ENCODE measurements at regions of chr19 and their contacts with region 1.

Region 1: GRCh38 chr19:38929929-38930775 is at the start of gene SARS2:
- DNase-seq: peak; percentile 59
- H3K4me3 ChIP-seq: peak within 1 kb of the TSS; percentile 97
- CTCF ChIP-seq: peak; percentile 97

Region 2: DNA sequence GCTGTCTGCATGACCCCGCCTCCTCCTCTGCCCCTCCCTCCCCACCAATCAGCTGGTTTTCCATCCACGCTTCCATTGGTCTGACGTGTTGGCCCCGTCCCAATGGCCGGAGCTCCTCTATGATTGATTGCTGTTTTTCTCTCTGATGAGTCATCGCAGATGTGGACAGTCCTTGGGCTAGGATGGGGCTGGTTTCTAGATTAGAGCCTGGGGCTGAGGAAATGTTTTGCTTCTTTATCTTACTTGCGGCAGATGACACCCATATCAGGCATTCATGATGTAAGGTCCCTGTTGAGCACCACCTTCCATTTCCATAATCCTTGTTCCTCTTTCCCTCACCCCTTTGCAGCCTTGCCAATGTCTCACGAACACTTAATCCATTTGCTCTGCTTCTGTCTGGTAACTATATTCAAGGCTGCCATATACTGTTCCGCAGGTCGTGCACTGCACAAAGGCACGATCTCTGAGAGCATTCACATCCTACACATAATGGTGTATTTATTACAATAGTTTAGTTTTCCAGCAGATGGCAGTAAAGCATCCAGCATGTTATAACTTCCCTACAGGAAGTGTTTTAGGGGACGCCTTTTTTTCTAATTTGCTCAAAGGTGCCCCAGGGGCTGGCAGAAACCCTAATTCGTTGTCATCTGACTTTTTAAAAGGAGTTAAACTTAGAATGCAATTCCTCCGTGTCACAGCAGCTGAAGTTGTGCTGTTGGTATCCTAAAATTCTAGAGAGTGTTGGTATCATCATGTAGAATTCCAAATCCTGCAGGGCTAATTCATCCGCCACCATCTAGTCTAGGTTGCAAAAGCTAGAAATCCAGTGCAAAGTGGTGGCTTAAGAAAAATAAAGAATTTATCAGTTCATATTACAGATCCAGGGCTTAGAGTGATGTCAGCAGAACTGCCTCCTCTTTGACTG is 385.9 kb before region 1 on chr19:
- CTCF ChIA-PET with region 1: interaction called, 13 read pairs
- POLR2A ChIA-PET with region 1: no interaction called
- DNase-seq: peak; percentile 12
- H3K4me3 ChIP-seq: no peak overlapping the region
- CTCF ChIP-seq: peak; percentile 15

Region 3: GRCh38 chr19:38849860-38850435 is 80.2 kb before region 1 on chr19 and contains the start of gene HNRNPL:
- CTCF ChIA-PET with region 1: interaction called, 14 read pairs
- POLR2A ChIA-PET with region 1: interaction called, 4 read pairs
- DNase-seq: no peak
- H3K4me3 ChIP-seq: peak within 1 kb of the TSS; percentile 77
- CTCF ChIP-seq: peak; percentile 91

Region 4: DNA sequence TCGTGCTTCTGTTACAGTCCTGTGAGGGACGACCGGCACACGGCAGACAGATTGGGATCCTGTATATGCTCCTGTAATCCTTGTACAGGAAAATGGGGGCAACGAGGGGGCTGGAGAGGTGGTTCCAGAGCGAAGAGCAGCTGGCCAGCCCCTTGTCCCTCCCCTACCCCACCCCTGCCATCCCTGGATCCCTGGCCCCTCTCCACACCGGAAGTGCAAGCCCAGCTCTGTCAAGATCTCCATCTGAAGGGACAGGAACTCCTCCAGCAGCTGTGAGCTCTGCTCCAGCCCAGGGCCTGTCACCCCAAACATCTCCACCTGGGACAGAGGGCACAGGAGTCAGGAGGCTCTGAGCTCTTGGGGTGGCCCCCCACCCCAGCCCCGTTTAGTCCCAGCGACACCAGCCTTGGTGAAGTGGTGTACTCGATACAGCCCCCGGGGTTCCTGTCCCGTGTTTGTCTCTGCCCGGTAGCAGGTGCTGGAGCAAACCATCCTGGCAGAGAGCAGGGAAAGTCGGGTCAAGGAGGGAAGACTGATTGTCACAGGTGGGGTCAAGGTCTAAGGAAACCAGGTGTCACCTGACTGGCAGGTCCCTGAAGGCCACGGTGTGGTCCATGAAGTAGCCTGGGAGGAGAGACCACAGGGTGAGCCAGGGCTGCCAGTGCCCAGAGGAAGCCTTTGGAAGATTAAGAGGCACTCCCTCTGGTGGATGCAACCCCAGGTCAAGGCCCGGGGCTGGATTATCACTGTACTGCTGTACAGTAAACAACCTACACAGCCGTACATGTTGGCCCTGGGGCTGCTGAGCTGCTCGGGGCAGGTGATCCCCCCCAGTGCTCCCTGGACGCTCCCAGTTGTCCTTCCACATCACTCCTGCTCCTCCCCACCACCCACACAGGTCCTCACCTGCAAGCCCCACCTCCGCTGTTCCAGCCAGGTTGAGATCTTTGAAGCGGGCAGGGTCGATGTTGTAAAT is 12.3 kb before region 1 on chr19:
- CTCF ChIA-PET with region 1: interaction called, 90 read pairs
- POLR2A ChIA-PET with region 1: no interaction called
- DNase-seq: no peak
- H3K4me3 ChIP-seq: no peak overlapping the region
- CTCF ChIP-seq: no peak